Natural killer cell (primary cell): ENCODE measurements at regions of chr4 and their contacts with region 1.

Region 1: DNA sequence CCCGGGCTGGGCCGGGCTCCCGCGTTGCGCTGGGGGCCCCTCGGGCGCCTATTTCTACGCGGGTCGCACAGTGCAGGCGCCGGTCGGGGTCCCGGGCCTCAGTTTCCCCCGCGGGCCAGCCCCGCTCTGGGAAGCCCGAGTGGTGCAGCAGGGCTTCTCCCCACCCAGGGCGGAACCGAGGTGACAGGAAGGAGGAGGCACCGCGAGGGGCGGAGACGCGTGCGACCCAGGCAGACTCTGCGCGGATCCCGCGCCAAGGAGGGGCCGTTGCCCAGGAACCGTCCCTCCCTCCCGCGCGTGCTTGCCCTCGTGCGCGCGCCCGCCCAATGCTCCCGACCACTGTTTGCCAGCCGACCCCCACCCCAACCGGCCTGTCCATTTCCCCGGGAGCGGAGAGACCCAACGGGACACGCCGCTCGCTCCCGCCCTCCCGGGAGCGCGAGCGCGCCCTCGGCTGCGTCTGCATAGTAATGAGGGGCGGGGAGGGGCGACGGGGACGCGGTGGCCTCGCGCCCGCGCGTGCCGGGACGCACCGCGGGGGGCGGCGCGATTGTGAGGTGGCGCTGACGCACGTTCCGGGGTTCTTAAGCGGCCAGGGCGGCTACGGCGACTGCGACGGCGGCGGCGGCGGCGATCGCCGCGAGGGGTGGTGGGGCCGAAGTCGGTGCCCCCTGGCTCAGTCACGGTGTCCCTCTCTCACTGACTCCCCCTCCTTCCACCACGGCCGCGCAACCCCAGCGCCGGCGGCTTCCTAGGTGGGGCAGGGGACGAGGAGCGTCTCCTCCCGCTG is at the start of gene CPEB2:
- DNase-seq: peak; percentile 89 to 96
- ATAC-seq: peak; percentile 68 to 87 (median 73)
- H3K4me3 ChIP-seq: peak within 1 kb of the TSS; percentile 87
- H3K4me3 Mint-ChIP-seq: peak within 1 kb of the TSS; percentile 90
- H3K27ac ChIP-seq: peak within 1 kb of the TSS; percentile 98
- H3K27ac Mint-ChIP-seq: peak within 1 kb of the TSS; percentile 91 to 96
- H3K4me1 ChIP-seq: peaks cover 2% of the 10 kb centered on the region
- H3K4me1 Mint-ChIP-seq: peaks cover 26 to 30% of the 10 kb centered on the region in 2 donors
- H3K27me3 ChIP-seq: no peaks in the 10 kb centered on the region
- H3K27me3 Mint-ChIP-seq: peaks cover 0 to 3% of the 10 kb centered on the region in 2 donors
- CTCF ChIP-seq: no peak
- total RNA-seq, gene CPEB2: 24.7 to 32.5 (median 29.0) TPM

Region 2: GRCh38 chr4:13484122-13484748 is 1517.8 kb before region 1 on chr4 and contains the start of gene RAB28:
- intact Hi-C with region 1: loop called (anchors 5 kb)
- DNase-seq: peak; percentile 94 to 96
- ATAC-seq: peak; percentile 87 to 97 (median 88)
- H3K4me3 ChIP-seq: peak within 1 kb of the TSS; percentile 58
- H3K4me3 Mint-ChIP-seq: peak within 1 kb of the TSS; percentile 92
- H3K27ac ChIP-seq: peak within 1 kb of the TSS; percentile 91
- H3K27ac Mint-ChIP-seq: peak within 1 kb of the TSS; percentile 98 to 99
- H3K4me1 ChIP-seq: peaks cover 18% of the 10 kb centered on the region
- H3K4me1 Mint-ChIP-seq: peaks cover 20 to 27% of the 10 kb centered on the region in 2 donors
- H3K27me3 ChIP-seq: peaks cover 3% of the 10 kb centered on the region
- H3K27me3 Mint-ChIP-seq: peaks cover 13 to 28% of the 10 kb centered on the region in 2 donors
- CTCF ChIP-seq: no peak
- total RNA-seq, gene RAB28: 10.2 to 13.1 (median 12.9) TPM

Region 3: DNA sequence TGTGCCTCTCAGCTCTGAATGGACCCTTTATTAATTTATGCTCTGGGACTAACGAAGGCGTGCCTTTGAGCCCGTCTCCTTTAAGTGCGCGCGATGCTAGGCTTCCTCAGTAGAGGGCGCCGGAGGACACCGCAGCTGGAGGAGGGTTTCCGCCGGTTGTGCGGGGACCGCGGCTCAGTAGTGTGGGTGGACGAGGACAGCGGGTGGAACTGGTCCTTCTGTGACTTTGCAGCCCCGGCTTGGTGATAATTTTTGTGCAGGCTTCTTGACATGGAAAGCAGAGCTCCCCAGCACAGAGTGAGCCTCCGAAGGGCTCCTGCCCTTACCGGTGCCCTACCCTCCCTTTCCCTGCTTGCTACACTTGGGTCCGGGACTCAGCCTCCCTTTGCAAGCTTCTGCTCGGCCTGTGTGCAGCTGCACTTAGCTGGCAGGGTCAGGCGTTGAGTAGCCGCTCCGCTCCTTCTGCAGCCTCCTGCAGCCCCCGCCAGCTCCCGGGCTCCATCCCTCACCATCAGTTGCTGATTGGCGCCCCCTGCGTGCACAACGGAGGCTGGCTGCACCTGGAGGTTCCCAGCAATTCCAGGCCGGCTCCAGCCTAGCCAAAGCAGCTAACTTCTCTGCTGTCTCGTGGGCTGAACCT is 1347.8 kb before region 1 on chr4:
- intact Hi-C with region 1: loop called (anchors 10 kb)
- DNase-seq: peak; percentile 76 to 85
- ATAC-seq: peak; percentile 95 to 98 (median 95)
- H3K4me3 ChIP-seq: peak overlapping the region; percentile 49
- H3K4me3 Mint-ChIP-seq: peak overlapping the region; percentile 88
- H3K27ac ChIP-seq: no peak overlapping the region
- H3K27ac Mint-ChIP-seq: peak overlapping the region in 1 of 2 donors; percentile 53
- H3K4me1 ChIP-seq: peaks cover 9% of the 10 kb centered on the region
- H3K4me1 Mint-ChIP-seq: peaks cover 13 to 20% of the 10 kb centered on the region in 2 donors
- H3K27me3 ChIP-seq: no peaks in the 10 kb centered on the region
- H3K27me3 Mint-ChIP-seq: peaks cover 4% of the 10 kb centered on the region in 2 donors
- CTCF ChIP-seq: peak; percentile 90

Region 4: GRCh38 chr4:14924812-14925344 is 77.2 kb before region 1 on chr4:
- intact Hi-C with region 1: loop called (anchors 2 kb)
- DNase-seq: peak in 1 of 2 donors; percentile 16
- ATAC-seq: peak; percentile 16 to 52 (median 38)
- H3K4me3 ChIP-seq: no peak overlapping the region
- H3K4me3 Mint-ChIP-seq: no peak overlapping the region
- H3K27ac ChIP-seq: no peak overlapping the region
- H3K27ac Mint-ChIP-seq: no peak overlapping the region
- H3K4me1 ChIP-seq: no peaks in the 10 kb centered on the region
- H3K4me1 Mint-ChIP-seq: peaks cover 4% of the 10 kb centered on the region in 2 donors
- H3K27me3 ChIP-seq: no peaks in the 10 kb centered on the region
- H3K27me3 Mint-ChIP-seq: no peaks in the 10 kb centered on the region
- CTCF ChIP-seq: no peak

Region 5: DNA sequence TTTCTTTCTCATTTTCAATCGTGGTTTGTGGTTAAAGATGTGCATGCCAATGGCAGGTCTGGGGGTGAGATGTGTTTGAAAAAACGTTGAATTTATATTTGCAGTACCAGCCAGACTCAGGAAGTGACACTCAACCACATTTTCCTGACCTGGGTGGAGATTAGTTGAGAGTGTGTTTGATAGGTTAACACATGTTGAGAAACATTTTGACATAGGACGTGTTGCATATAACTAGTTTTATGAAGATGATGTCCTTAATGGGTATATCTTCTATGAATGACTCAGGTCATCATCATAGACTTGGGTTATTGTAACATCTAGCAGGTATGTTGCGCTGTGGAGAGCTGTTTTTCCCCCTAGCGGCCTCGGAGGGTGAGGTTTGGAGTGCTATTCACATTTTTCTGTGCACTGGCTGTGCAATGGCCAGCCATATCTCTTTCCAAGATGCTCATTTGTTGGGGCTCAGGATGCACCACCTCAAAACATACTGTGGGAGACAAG is 754.3 kb after region 1 on chr4:
- intact Hi-C with region 1: loop called (anchors 10 kb)
- DNase-seq: peak; percentile 68 to 91
- ATAC-seq: peak; percentile 85 to 95 (median 91)
- H3K4me3 ChIP-seq: peak overlapping the region; percentile 11
- H3K4me3 Mint-ChIP-seq: peak overlapping the region; percentile 90
- H3K27ac ChIP-seq: peak overlapping the region; percentile 40
- H3K27ac Mint-ChIP-seq: peak overlapping the region; percentile 79 to 88
- H3K4me1 ChIP-seq: peaks cover 36% of the 10 kb centered on the region
- H3K4me1 Mint-ChIP-seq: peaks cover 48 to 49% of the 10 kb centered on the region in 2 donors
- H3K27me3 ChIP-seq: no peaks in the 10 kb centered on the region
- H3K27me3 Mint-ChIP-seq: peaks cover 0 to 4% of the 10 kb centered on the region in 2 donors
- CTCF ChIP-seq: peak; percentile 65

Region 6: GRCh38 chr4:16225863-16226815 is 1224.1 kb after region 1 on chr4 and contains the start of gene TAPT1:
- intact Hi-C with region 1: loop called (anchors 10 kb)
- DNase-seq: peak; percentile 70 to 80
- ATAC-seq: peak; percentile 76 to 87 (median 81)
- H3K4me3 ChIP-seq: peak within 1 kb of the TSS; percentile 80
- H3K4me3 Mint-ChIP-seq: peak within 1 kb of the TSS; percentile 95
- H3K27ac ChIP-seq: peak within 1 kb of the TSS; percentile 88
- H3K27ac Mint-ChIP-seq: peak within 1 kb of the TSS; percentile 88 to 90
- H3K4me1 ChIP-seq: peaks cover 21% of the 10 kb centered on the region
- H3K4me1 Mint-ChIP-seq: peaks cover 37 to 58% of the 10 kb centered on the region in 2 donors
- H3K27me3 ChIP-seq: no peaks in the 10 kb centered on the region
- H3K27me3 Mint-ChIP-seq: no peaks in the 10 kb centered on the region
- CTCF ChIP-seq: no peak
- total RNA-seq, gene TAPT1: 52.5 to 67.5 (median 52.7) TPM